ENCODE measurements at regions of chr5 and their contacts with region 1.

Region 1: DNA sequence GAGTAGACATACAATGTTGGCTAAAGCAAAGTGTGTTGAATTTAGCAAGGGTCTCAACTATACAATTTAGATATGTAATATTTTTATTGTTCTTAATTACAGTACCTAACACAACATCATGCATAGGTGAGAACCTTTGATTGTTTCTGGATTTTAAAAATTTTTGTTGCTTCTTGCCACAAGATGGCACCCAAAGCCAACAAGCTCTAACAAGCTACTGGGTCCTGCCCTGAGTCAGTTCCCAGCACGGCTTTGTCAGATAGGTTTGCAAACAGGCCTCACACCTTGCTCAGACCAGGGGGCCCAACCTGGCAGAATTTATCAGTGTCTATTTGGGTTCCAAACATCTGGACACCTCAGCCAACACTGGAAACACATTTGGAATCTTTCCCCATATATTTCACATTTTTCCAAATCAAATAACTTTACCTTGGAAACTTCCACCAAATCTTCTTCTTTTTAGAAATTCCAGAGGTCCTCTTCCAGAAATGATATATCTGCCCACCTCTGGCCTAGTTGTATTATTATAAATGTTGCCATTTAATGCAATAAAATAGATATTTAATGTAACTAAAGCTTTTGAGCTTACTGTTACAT is 49.5 kb upstream of the EGFLAM start:
- DNase-seq: peak; percentile 40
- H3K4me3 Mint-ChIP-seq: no peak overlapping the region
- H3K27ac Mint-ChIP-seq: no peak overlapping the region
- H3K4me1 Mint-ChIP-seq: no peaks in the 10 kb centered on the region
- H3K27me3 Mint-ChIP-seq: peaks cover 59% of the 10 kb centered on the region
- CTCF ChIP-seq: no peak

Region 2: GRCh38 chr5:37668524-37669047 is 540.3 kb before region 1 on chr5:
- CTCF ChIA-PET with region 1: no interaction called
- intact Hi-C with region 1: loop called (anchors 10 kb)
- DNase-seq: peak; percentile 73
- H3K4me3 Mint-ChIP-seq: no peak overlapping the region
- H3K27ac Mint-ChIP-seq: peak overlapping the region; percentile 25
- H3K4me1 Mint-ChIP-seq: no peaks in the 10 kb centered on the region
- H3K27me3 Mint-ChIP-seq: no peaks in the 10 kb centered on the region
- CTCF ChIP-seq: no peak

Region 3: DNA sequence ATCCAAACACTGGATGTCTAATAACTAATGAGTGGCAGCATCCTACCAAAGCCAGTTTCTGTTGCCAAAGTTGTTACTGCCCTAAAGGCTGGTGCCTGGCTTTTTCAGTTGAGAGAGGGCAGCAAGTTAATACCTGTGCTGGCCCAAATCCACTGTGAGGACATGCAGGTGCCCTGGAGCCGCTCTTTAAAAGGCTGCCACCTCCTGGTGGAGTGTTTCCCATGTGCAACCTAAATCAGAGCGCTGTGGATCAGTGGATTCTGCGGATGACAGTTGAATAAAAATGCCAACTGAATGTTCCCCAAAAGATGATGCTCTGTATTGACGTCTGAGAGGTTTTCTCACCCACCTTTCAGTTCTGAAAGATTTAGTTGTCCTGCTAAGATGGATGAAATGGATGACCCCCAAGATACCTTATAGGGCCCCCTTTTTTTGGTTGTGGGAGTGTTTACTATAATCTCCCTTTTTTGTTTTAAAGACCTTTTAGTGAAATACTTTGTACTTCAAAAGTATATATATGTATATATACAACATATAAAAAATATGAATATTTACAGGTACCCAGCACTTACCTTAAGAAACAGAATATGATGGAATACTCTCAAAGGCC is 195.9 kb after region 1 on chr5:
- CTCF ChIA-PET with region 1: no interaction called
- intact Hi-C with region 1: loop called (anchors 1 kb)
- DNase-seq: peak; percentile 41
- H3K4me3 Mint-ChIP-seq: no peak overlapping the region
- H3K27ac Mint-ChIP-seq: no peak overlapping the region
- H3K4me1 Mint-ChIP-seq: no peaks in the 10 kb centered on the region
- H3K27me3 Mint-ChIP-seq: peaks cover 95% of the 10 kb centered on the region
- CTCF ChIP-seq: peak; percentile 27

Measured in Calu3 (cell line).